Ascending aorta (tissue), 2 donors: ENCODE measurements at regions of chr3 and their contacts with region 1.

Region 1: GRCh38 chr3:145533696-145534095 is 627.3 kb downstream of the PLOD2 start:
- DNase-seq: no peak
- H3K4me3 ChIP-seq: no peak overlapping the region
- H3K27ac ChIP-seq: peak overlapping the region; percentile 49 to 62
- H3K4me1 ChIP-seq: peaks cover 0 to 14% of the 10 kb centered on the region in 2 donors
- H3K27me3 ChIP-seq: no peaks in the 10 kb centered on the region
- CTCF ChIP-seq: no peak

Region 2: DNA sequence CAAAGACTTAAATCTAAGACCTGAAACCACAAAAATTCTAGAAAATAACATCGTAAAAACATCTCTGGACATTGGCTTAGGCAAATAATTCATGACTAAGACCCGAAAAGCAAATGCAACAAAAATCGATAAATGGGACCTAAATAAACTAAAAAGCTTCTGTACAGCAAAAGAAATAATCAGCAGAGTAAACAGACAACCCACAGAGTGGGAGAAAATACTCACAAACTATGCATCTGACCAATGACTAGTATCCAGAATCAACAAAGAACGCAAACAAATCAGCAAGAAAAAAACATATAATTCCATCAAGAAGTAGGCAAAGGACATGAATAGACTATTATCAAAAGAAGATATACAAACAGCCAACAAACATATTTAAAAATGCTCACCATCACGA is 122.1 kb before region 1 on chr3:
- intact Hi-C with region 1: no loop called
- DNase-seq: no peak
- H3K4me3 ChIP-seq: no peak overlapping the region
- H3K27ac ChIP-seq: no peak overlapping the region
- H3K4me1 ChIP-seq: no peaks in the 10 kb centered on the region
- H3K27me3 ChIP-seq: no peaks in the 10 kb centered on the region
- CTCF ChIP-seq: no peak

Region 3: GRCh38 chr3:146100825-146101444 is 567.2 kb after region 1 on chr3:
- intact Hi-C with region 1: loop called (anchors 10 kb)
- DNase-seq: no peak
- H3K4me3 ChIP-seq: no peak overlapping the region
- H3K27ac ChIP-seq: peak overlapping the region in 1 of 2 donors; percentile 25
- H3K4me1 ChIP-seq: no peaks in the 10 kb centered on the region
- H3K27me3 ChIP-seq: no peaks in the 10 kb centered on the region
- CTCF ChIP-seq: no peak